Natural killer cell (primary cell): ENCODE measurements at regions of chr11 and their contacts with region 1.

Region 1: DNA sequence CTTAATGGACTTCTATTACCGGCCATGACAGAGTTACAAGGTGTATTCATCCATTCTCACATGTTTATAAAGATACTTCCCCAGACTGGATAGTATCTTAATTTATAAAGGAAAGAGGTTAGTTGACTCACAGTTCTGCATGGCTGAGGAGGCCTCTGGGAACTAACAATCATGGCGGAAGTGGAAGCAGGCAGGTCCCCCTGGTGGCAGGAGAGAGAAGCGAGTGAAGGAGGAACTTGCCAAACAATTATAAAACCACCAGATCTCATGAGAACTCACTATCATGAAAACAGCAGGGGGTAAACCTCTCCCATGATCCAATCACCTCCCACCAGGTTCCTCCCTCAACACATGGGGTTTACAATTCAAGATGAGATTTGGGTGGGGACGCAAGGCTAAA is 170.0 kb upstream of the PDGFD start:
- DNase-seq: peak in 1 of 2 donors; percentile 21
- ATAC-seq: no peak
- H3K4me3 ChIP-seq: no peak overlapping the region
- H3K4me3 Mint-ChIP-seq: no peak overlapping the region
- H3K27ac ChIP-seq: no peak overlapping the region
- H3K27ac Mint-ChIP-seq: no peak overlapping the region
- H3K4me1 ChIP-seq: no peaks in the 10 kb centered on the region
- H3K4me1 Mint-ChIP-seq: no peaks in the 10 kb centered on the region
- H3K27me3 ChIP-seq: no peaks in the 10 kb centered on the region
- H3K27me3 Mint-ChIP-seq: peaks cover 7 to 8% of the 10 kb centered on the region in 2 donors
- CTCF ChIP-seq: no peak

Region 2: DNA sequence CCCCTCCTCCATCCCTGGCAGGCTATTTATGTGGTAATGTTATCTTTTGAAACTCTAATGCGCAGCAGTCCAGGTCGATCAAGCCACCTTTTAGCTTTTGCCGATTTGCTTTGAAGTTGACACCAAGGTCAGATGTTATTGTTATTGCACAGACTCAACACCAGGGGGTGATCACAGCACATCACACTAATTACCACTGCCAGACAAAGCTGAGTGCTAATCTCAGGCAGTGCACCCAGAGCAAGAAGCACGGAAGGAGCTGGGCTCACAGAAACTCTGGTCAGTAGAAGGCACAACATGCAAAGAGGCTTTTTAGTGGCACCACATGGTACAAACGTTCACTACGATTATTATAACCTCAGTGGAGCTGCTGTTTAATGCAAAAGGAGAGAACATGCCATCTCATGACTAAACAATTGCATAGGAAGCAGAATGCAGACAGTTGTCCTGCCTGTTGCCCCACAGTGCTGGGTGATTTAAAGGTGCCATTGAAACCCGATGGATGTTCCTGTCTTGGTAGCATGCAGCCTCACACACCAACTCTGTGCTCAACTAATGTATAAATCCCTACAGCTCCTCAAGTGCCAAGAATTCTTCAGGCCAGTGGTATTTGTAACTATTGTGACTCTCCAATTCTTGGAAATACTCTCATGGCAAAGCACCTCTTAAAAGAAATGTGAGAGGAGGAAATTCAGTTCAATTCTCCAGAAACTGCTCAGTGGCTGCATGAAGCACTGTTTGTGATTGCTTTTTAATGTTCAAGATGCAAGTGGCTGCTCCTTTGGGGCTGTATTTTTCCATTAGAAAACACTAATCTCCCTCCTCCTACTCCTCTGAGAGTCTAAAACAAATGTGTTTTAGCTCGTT is 651.4 kb before region 1 on chr11:
- intact Hi-C with region 1: loop called (anchors 2 kb)
- DNase-seq: peak; percentile 37 to 73
- ATAC-seq: peak; percentile 89 to 100 (median 99)
- H3K4me3 ChIP-seq: no peak overlapping the region
- H3K4me3 Mint-ChIP-seq: peak overlapping the region; percentile 29
- H3K27ac ChIP-seq: no peak overlapping the region
- H3K27ac Mint-ChIP-seq: peak overlapping the region in 1 of 2 donors; percentile 56
- H3K4me1 ChIP-seq: peaks cover 3% of the 10 kb centered on the region
- H3K4me1 Mint-ChIP-seq: peaks cover 7% of the 10 kb centered on the region in 2 donors
- H3K27me3 ChIP-seq: no peaks in the 10 kb centered on the region
- H3K27me3 Mint-ChIP-seq: peaks cover 2 to 7% of the 10 kb centered on the region in 2 donors
- CTCF ChIP-seq: peak; percentile 68

Region 3: GRCh38 chr11:103927535-103927934 is 406.4 kb before region 1 on chr11:
- intact Hi-C with region 1: loop called (anchors 5 kb)
- DNase-seq: peak in 1 of 2 donors; percentile 5
- ATAC-seq: peak in 2 of 3 donors; percentile 34 to 71
- H3K4me3 ChIP-seq: no peak overlapping the region
- H3K4me3 Mint-ChIP-seq: no peak overlapping the region
- H3K27ac ChIP-seq: no peak overlapping the region
- H3K27ac Mint-ChIP-seq: no peak overlapping the region
- H3K4me1 ChIP-seq: no peaks in the 10 kb centered on the region
- H3K4me1 Mint-ChIP-seq: peaks cover 26 to 29% of the 10 kb centered on the region in 2 donors
- H3K27me3 ChIP-seq: no peaks in the 10 kb centered on the region
- H3K27me3 Mint-ChIP-seq: no peaks in the 10 kb centered on the region
- CTCF ChIP-seq: peak; percentile 44

Region 4: DNA sequence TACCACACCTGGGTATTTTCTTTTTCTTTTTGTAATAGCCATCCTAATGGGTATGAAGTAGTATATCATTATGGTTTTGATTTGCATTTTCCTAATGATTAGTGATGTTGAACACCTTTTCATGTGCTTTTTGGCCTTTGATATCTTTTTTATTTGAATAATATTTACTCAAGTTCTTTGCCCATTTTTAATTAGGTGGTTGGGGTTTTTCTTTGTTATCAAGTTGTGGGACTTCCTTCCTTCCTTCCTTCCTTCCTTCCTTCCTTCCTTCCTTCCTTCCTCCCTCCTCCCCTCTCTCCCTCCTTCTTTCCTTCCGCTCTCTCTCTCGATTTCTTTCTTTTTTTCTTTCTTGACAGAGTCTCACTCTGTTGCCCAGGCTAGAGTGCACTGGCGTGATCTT is 95.1 kb before region 1 on chr11:
- intact Hi-C with region 1: no loop called
- DNase-seq: no peak
- ATAC-seq: no peak
- H3K4me3 ChIP-seq: no peak overlapping the region
- H3K4me3 Mint-ChIP-seq: no peak overlapping the region
- H3K27ac ChIP-seq: no peak overlapping the region
- H3K27ac Mint-ChIP-seq: no peak overlapping the region
- H3K4me1 ChIP-seq: no peaks in the 10 kb centered on the region
- H3K4me1 Mint-ChIP-seq: no peaks in the 10 kb centered on the region
- H3K27me3 ChIP-seq: no peaks in the 10 kb centered on the region
- H3K27me3 Mint-ChIP-seq: peaks cover 8 to 14% of the 10 kb centered on the region in 2 donors
- CTCF ChIP-seq: no peak